Panc1 (cell line): ENCODE measurements at regions of chr10 and their contacts with region 1.

Region 1: GRCh38 chr10:69914398-69915214 is 112.9 kb downstream of the COL13A1 start:
- DNase-seq: peak; percentile 28
- ATAC-seq: peak; percentile 92
- H3K4me3 ChIP-seq: no peak overlapping the region
- H3K27ac ChIP-seq: no peak overlapping the region
- H3K4me1 ChIP-seq: no peaks in the 10 kb centered on the region
- H3K27me3 ChIP-seq: no peaks in the 10 kb centered on the region
- CTCF ChIP-seq: peak; percentile 98

Region 2: GRCh38 chr10:69639291-69640195 is 275.1 kb before region 1 on chr10:
- CTCF ChIA-PET with region 1: no interaction called
- POLR2A ChIA-PET with region 1: no interaction called
- in situ Hi-C with region 1: no loop called
- intact Hi-C with region 1: loop called (anchors 10 kb)
- DNase-seq: peak; percentile 51
- ATAC-seq: peak; percentile 79
- H3K4me3 ChIP-seq: no peak overlapping the region
- H3K27ac ChIP-seq: no peak overlapping the region
- H3K4me1 ChIP-seq: no peaks in the 10 kb centered on the region
- H3K27me3 ChIP-seq: no peaks in the 10 kb centered on the region
- CTCF ChIP-seq: peak; percentile 97

Region 3: GRCh38 chr10:69749178-69750010 is 165.2 kb before region 1 on chr10:
- CTCF ChIA-PET with region 1: no interaction called
- POLR2A ChIA-PET with region 1: no interaction called
- in situ Hi-C with region 1: no loop called
- intact Hi-C with region 1: no loop called
- DNase-seq: no peak
- ATAC-seq: no peak
- H3K4me3 ChIP-seq: no peak overlapping the region
- H3K27ac ChIP-seq: no peak overlapping the region
- H3K4me1 ChIP-seq: no peaks in the 10 kb centered on the region
- H3K27me3 ChIP-seq: peaks cover 8% of the 10 kb centered on the region; the same call in 1 of the 2 replicates
- CTCF ChIP-seq: no peak

Region 4: GRCh38 chr10:69786791-69787190 is 127.8 kb before region 1 on chr10:
- CTCF ChIA-PET with region 1: interaction called, 22 read pairs
- POLR2A ChIA-PET with region 1: no interaction called
- in situ Hi-C with region 1: no loop called
- intact Hi-C with region 1: loop called (anchors 5 kb)
- DNase-seq: no peak
- ATAC-seq: peak; percentile 77
- H3K4me3 ChIP-seq: no peak overlapping the region
- H3K27ac ChIP-seq: no peak overlapping the region
- H3K4me1 ChIP-seq: no peaks in the 10 kb centered on the region
- H3K27me3 ChIP-seq: peaks cover 4% of the 10 kb centered on the region
- CTCF ChIP-seq: peak; percentile 61

Region 5: DNA sequence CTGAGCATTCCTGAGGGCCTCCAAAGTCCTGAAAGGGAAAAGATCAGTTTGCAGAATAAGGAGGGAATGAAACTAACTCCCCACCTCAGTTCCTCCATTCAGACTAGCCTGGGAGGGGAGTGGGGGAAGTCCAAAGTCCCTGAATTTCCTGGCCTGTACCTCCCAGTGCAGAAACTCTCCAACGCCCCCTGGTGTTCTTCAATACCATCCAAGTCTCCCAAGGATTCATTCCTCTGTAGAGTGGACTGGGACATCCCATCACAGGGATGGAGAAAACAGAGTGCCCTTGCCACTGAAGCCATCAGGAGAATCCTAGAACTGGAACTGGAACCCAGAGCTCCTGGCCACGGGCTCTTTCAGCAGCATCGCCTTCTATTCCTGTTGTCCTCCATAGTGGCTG is 114.5 kb before region 1 on chr10:
- CTCF ChIA-PET with region 1: interaction called, 3 read pairs
- POLR2A ChIA-PET with region 1: no interaction called
- in situ Hi-C with region 1: no loop called
- intact Hi-C with region 1: loop called (anchors 5 kb)
- DNase-seq: no peak
- ATAC-seq: peak; percentile 73
- H3K4me3 ChIP-seq: no peak overlapping the region
- H3K27ac ChIP-seq: no peak overlapping the region
- H3K4me1 ChIP-seq: peaks cover 9% of the 10 kb centered on the region
- H3K27me3 ChIP-seq: peaks cover 7% of the 10 kb centered on the region
- CTCF ChIP-seq: peak; percentile 92

Region 6: DNA sequence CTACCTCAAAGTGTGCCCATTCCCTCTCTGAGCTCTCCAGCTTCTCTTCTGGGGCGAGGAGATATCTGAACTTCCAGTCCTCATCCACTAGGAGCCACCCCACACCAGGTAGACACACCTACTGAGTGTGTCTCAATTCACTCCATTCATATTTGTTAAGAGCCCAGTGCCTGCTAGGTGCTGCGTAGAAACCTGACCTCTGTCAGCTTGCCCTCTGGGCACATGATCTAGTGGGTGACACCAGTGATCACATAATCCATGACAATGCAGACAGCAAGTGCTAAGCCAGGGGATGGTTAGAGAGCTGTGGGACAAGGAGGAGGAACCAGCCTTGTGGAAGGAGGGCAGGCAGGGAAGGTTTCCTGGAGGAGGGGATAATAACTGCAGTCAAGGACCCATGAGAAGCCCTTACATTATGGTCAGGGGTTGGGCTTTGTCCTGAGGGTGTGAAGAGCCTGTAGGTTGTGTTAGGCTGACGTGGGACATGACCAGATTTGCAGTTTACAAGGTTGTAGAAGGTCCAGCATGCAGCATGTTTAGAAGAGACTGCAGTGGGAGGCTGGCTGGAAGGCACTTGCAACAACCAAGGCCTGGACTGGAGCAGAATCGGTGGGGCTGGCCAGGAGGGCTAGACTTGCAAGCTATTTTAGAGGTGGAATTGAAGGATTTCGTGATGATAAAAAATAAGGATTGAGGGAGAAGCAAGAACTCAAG is 31.1 kb before region 1 on chr10:
- CTCF ChIA-PET with region 1: interaction called, 15 read pairs
- POLR2A ChIA-PET with region 1: no interaction called
- in situ Hi-C with region 1: no loop called
- intact Hi-C with region 1: no loop called
- DNase-seq: no peak
- ATAC-seq: peak; percentile 57
- H3K4me3 ChIP-seq: no peak overlapping the region
- H3K27ac ChIP-seq: no peak overlapping the region
- H3K4me1 ChIP-seq: no peaks in the 10 kb centered on the region
- H3K27me3 ChIP-seq: no peaks in the 10 kb centered on the region
- CTCF ChIP-seq: no peak

Region 7: DNA sequence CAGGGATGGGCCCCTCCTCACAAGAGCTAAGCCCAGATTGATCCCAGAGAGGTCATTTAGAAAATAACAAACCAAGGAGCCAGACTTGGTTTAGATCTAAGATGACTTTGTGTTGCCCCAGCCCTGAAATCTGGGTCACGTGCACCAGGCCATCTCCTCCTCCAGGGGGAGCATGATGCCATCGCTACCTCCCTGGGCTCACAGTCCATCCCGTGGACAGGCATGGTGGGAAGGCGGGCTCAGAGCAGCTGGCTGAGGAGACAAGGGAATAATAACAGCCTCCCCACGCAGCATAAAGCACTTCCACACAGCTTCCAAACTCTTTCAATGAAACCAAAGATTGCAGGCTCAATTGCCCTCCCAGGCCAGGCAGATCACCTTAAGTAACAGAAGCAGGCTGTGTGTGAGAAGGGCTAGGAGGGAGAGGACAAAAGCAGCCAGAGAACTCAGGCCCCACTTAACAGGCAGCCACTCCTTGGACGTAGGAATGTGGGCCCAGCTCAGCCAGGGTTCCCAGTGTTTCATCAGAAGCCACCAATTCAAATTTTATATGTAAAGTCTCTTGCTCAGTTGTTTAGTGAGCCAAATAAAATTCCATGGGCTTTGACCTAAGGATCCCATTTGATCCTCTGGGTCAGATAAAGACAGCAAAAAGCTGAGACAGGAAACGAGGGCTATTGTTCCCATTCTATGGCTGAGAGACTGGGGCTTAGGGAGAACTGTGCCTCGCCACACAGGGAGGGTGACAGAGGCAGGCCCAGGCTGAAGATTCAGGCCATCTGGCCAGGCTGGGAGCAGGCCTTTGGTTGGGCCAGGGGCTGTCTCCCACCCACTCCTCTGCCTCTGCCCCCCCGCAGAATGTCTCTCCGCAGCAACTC is 12.7 kb before region 1 on chr10:
- CTCF ChIA-PET with region 1: interaction called, 11 read pairs
- POLR2A ChIA-PET with region 1: no interaction called
- in situ Hi-C with region 1: no loop called
- intact Hi-C with region 1: no loop called
- DNase-seq: no peak
- ATAC-seq: peak; percentile 90
- H3K4me3 ChIP-seq: no peak overlapping the region
- H3K27ac ChIP-seq: no peak overlapping the region
- H3K4me1 ChIP-seq: no peaks in the 10 kb centered on the region
- H3K27me3 ChIP-seq: no peaks in the 10 kb centered on the region
- CTCF ChIP-seq: peak; percentile 82; the same call in 1 of the 2 replicates

Region 8: GRCh38 chr10:70064486-70064885 is 149.9 kb after region 1 on chr10:
- CTCF ChIA-PET with region 1: no interaction called
- POLR2A ChIA-PET with region 1: no interaction called
- in situ Hi-C with region 1: no loop called
- intact Hi-C with region 1: no loop called
- DNase-seq: no peak
- ATAC-seq: no peak
- H3K4me3 ChIP-seq: no peak overlapping the region
- H3K27ac ChIP-seq: no peak overlapping the region
- H3K4me1 ChIP-seq: no peaks in the 10 kb centered on the region
- H3K27me3 ChIP-seq: peaks cover 3% of the 10 kb centered on the region; the same call in 1 of the 2 replicates
- CTCF ChIP-seq: no peak